ENCODE measurements at regions of chr3 and their contacts with region 1.

Region 1: DNA sequence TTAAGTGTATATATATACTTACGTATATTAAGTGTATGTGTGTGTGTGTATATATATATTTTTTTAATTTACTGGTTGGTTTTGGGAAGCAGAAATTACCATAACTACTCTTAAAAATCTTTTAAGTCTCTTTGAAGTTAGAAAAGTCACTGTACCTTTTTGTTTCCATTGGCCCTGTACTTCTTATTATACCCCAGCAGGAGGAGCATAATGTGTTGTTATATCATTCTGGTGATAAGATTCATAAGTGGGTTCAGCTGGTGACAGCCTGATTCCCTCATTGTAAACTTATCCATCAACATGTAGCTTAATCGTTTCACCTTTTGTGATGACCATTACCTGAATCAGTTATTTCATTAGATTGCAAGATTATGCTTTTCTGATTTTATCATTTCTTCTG is 30.8 kb downstream of the MLH1 start:
- DNase-seq: no peak
- H3K4me3 ChIP-seq: no peak overlapping the region
- H3K27ac ChIP-seq: no peak overlapping the region
- H3K4me1 ChIP-seq: no peaks in the 10 kb centered on the region
- H3K27me3 ChIP-seq: no peaks in the 10 kb centered on the region
- CTCF ChIP-seq: peak in 5 of 6 experiments; percentile 19 to 51 (median 30)
- POLR2A ChIP-seq: no peak

Region 2: DNA sequence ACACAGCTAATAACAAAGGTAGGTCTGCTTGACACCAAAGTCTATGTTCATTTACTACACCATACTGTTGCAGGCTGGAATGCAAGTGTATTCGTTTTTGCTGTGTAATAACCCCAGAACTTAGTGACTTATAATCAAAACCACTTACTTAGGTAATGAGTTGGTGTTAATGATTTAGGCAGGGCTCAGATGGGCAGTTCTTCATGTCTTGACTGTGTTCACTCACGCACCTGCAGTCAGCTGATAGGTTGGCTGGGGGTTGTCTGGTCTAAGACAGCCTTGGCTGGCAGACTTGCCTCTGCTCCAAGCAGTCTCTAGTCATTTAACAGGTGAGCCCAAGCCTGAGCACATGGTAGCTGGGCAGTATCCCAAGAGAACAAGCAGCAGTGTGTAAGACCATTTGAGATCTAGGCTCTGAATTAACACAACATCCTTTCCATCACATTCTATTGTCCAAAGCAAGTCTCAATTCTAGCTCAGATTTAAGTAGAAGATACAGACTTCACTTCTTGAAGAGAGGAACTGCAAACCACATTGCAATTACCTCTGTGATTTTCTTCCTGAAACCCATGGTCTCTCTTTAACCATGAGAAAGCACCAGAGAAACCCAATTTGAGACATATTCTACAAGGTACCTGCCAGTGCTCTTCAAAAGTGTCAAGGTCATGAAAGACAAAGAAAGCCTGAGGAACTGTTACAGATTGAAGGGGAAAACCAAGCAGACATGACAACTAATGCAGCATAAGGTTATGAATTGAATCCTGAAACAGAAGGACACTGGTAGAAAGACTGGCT is 246.5 kb before region 1 on chr3:
- intact Hi-C with region 1: no loop called
- DNase-seq: no peak
- H3K4me3 ChIP-seq: no peak overlapping the region
- H3K27ac ChIP-seq: no peak overlapping the region
- H3K4me1 ChIP-seq: no peaks in the 10 kb centered on the region
- H3K27me3 ChIP-seq: no peaks in the 10 kb centered on the region
- CTCF ChIP-seq: no peak
- POLR2A ChIP-seq: no peak

Region 3: DNA sequence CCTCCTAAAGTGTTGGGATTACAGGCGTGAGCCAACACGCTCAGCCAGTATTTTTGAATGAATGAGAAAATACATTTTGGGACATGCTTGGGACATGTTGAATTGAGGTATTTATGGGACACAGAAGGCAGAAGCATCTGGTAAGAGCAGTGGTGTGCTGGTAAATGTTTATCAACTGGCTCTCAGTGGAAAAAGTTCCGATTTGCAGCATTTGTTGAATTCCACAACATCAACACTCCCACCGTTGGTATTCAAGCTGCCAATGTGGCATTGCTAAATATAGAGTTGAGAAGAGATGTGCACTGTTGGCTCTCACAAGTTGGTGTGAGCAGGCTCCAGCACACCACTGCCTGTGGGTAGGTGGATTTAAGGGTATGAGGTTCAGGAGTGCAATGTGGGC is 186.1 kb after region 1 on chr3:
- intact Hi-C with region 1: loop called (anchors 10 kb)
- DNase-seq: no peak
- H3K4me3 ChIP-seq: no peak overlapping the region
- H3K27ac ChIP-seq: peak overlapping the region in 2 of 4 donors; percentile 9 to 23
- H3K4me1 ChIP-seq: peaks cover 0 to 27% (median 6%) of the 10 kb centered on the region in 3 donors
- H3K27me3 ChIP-seq: no peaks in the 10 kb centered on the region
- CTCF ChIP-seq: no peak
- POLR2A ChIP-seq: no peak